ENCODE measurements at regions of chr4 and their contacts with region 1.

Region 1: GRCh38 chr4:6574747-6575502 is at the start of gene MAN2B2:
- DNase-seq: peak; percentile 98

Region 2: GRCh38 chr4:6562931-6563901 is 11.7 kb before region 1 on chr4:
- CTCF ChIA-PET with region 1: interaction called, 3 read pairs
- POLR2A ChIA-PET with region 1: interaction called, 23 read pairs
- DNase-seq: peak; percentile 52

Measured in HEK293T (cell line).